Breast epithelium (tissue), 4 donors: ENCODE measurements at regions of chr11 and their contacts with region 1.

Region 1: DNA sequence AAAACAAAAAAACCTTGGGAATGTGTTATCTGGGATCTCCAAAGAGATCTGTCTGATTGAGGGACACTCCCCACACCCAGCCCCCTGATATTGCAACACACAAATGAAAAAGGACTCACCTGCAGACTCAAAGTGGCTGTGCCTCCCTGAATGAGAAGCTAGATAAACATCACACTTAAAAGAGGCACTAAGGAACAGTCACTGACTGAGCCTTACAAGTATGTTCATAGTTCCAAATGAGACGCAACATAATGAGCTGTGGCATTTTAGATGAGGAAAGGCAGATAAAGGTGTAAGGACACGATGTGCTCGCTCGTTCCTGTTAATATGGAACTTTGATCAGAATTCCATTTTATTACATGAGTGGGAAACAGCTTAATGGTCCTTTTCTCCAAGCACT is 21.0 kb upstream of the CFAP300 start:
- DNase-seq: no peak
- H3K4me3 ChIP-seq: no peak overlapping the region
- H3K27ac ChIP-seq: no peak overlapping the region
- H3K4me1 ChIP-seq: no peaks in the 10 kb centered on the region
- H3K27me3 ChIP-seq: no peaks in the 10 kb centered on the region
- CTCF ChIP-seq: no peak
- POLR2A ChIP-seq: no peak

Region 2: DNA sequence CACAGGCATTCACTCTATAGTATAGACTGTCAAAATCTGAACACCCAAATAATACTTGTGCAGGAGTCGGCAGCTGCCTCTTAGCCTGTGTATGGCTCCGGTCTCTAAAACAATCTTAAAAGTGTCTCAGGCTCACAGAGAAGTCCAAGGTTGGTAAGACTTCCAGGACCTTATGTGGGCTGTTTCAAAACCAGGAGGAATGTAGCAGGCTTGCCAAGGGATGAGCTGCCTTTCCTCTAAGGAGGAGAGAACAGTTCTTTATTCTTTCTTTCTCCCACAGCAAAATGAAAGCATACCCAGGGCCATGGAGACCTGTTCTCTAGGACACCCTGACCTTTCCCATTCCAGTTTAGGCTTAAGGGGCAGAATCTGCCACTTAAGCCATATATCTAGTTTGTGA is 618.9 kb before region 1 on chr11:
- intact Hi-C with region 1: loop called (anchors 5 kb)
- DNase-seq: peak in 1 of 2 donors; percentile 61
- H3K4me3 ChIP-seq: peak overlapping the region in 1 of 3 donors; percentile 34
- H3K27ac ChIP-seq: peak overlapping the region; percentile 62 to 75
- H3K4me1 ChIP-seq: no peaks in the 10 kb centered on the region
- H3K27me3 ChIP-seq: no peaks in the 10 kb centered on the region
- CTCF ChIP-seq: no peak
- POLR2A ChIP-seq: no peak

Region 3: GRCh38 chr11:101974255-101974654 is 52.0 kb before region 1 on chr11:
- intact Hi-C with region 1: no loop called
- DNase-seq: no peak
- H3K4me3 ChIP-seq: no peak overlapping the region
- H3K27ac ChIP-seq: no peak overlapping the region
- H3K4me1 ChIP-seq: no peaks in the 10 kb centered on the region
- H3K27me3 ChIP-seq: no peaks in the 10 kb centered on the region
- CTCF ChIP-seq: no peak
- POLR2A ChIP-seq: no peak